Esophagus squamous epithelium (tissue), 5 donors: ENCODE measurements at regions of chr17 and their contacts with region 1.

Region 1: GRCh38 chr17:40168262-40168832 is 8.9 kb upstream of the RAPGEFL1 start:
- DNase-seq: no peak
- H3K4me3 ChIP-seq: no peak overlapping the region
- H3K27ac ChIP-seq: peak overlapping the region; percentile 21 to 70 (median 64)
- H3K4me1 ChIP-seq: peaks cover 0 to 10% (median 0%) of the 10 kb centered on the region in 3 donors
- H3K27me3 ChIP-seq: no peaks in the 10 kb centered on the region
- CTCF ChIP-seq: peak; percentile 82 to 90 (median 86)
- POLR2A ChIP-seq: no peak

Region 2: GRCh38 chr17:40019140-40019991 is 149.0 kb before region 1 on chr17:
- intact Hi-C with region 1: loop called (anchors 10 kb)
- DNase-seq: no peak
- H3K4me3 ChIP-seq: no peak overlapping the region
- H3K27ac ChIP-seq: peak overlapping the region in 3 of 4 donors; percentile 57 to 80 (median 67)
- H3K4me1 ChIP-seq: peaks cover 17 to 91% (median 71%) of the 10 kb centered on the region in 3 donors
- H3K27me3 ChIP-seq: no peaks in the 10 kb centered on the region
- CTCF ChIP-seq: peak in 1 of 6 experiments; percentile 6
- POLR2A ChIP-seq: no peak

Region 3: GRCh38 chr17:40113110-40113906 is 55.0 kb before region 1 on chr17:
- intact Hi-C with region 1: loop called (anchors 5 kb)
- DNase-seq: peak; percentile 77
- H3K4me3 ChIP-seq: peak overlapping the region; percentile 28 to 67 (median 48)
- H3K27ac ChIP-seq: peak overlapping the region; percentile 86 to 100 (median 96)
- H3K4me1 ChIP-seq: peaks cover 45 to 68% (median 58%) of the 10 kb centered on the region in 3 donors
- H3K27me3 ChIP-seq: no peaks in the 10 kb centered on the region
- CTCF ChIP-seq: peak; percentile 74 to 98 (median 96)
- POLR2A ChIP-seq: peak in 1 of 4 donors; percentile 20

Region 4: GRCh38 chr17:40224718-40225550 is 56.6 kb after region 1 on chr17:
- intact Hi-C with region 1: no loop called
- DNase-seq: no peak
- H3K4me3 ChIP-seq: peak overlapping the region; percentile 1 to 33 (median 15)
- H3K27ac ChIP-seq: peak overlapping the region; percentile 75 to 90 (median 83)
- H3K4me1 ChIP-seq: peaks cover 26 to 68% (median 33%) of the 10 kb centered on the region in 3 donors
- H3K27me3 ChIP-seq: no peaks in the 10 kb centered on the region
- CTCF ChIP-seq: no peak
- POLR2A ChIP-seq: no peak